ENCODE measurements at regions of chr3 and their contacts with region 1.

Region 1: GRCh38 chr3:189148081-189148507 is 23.7 kb upstream of the TPRG1 start:
- DNase-seq: peak; percentile 43 to 73 (median 53)
- H3K4me3 ChIP-seq: no peak overlapping the region
- H3K4me3 Mint-ChIP-seq: no peak overlapping the region
- H3K27ac ChIP-seq: no peak overlapping the region
- H3K27ac Mint-ChIP-seq: peak overlapping the region in 2 of 8 donors; percentile 5 to 9
- H3K4me1 ChIP-seq: peaks cover 18% of the 10 kb centered on the region
- H3K4me1 Mint-ChIP-seq: peaks cover 16 to 32% (median 25%) of the 10 kb centered on the region in 3 donors
- H3K27me3 ChIP-seq: no peaks in the 10 kb centered on the region
- H3K27me3 Mint-ChIP-seq: peaks cover 0 to 3% of the 10 kb centered on the region in 2 donors

Region 2: GRCh38 chr3:189123595-189124387 is 24.3 kb before region 1 on chr3:
- CTCF ChIA-PET with region 1: interaction called, 59 read pairs
- POLR2A ChIA-PET with region 1: interaction called, 4 read pairs
- DNase-seq: no peak
- H3K4me3 ChIP-seq: peak overlapping the region; percentile 30
- H3K4me3 Mint-ChIP-seq: peak overlapping the region; percentile 81 to 95 (median 86)
- H3K27ac ChIP-seq: no peak overlapping the region
- H3K27ac Mint-ChIP-seq: peak overlapping the region; percentile 17 to 98 (median 92)
- H3K4me1 ChIP-seq: peaks cover 13% of the 10 kb centered on the region
- H3K4me1 Mint-ChIP-seq: peaks cover 39 to 72% (median 72%) of the 10 kb centered on the region in 3 donors
- H3K27me3 ChIP-seq: no peaks in the 10 kb centered on the region
- H3K27me3 Mint-ChIP-seq: peaks cover 0 to 4% of the 10 kb centered on the region in 2 donors

Region 3: DNA sequence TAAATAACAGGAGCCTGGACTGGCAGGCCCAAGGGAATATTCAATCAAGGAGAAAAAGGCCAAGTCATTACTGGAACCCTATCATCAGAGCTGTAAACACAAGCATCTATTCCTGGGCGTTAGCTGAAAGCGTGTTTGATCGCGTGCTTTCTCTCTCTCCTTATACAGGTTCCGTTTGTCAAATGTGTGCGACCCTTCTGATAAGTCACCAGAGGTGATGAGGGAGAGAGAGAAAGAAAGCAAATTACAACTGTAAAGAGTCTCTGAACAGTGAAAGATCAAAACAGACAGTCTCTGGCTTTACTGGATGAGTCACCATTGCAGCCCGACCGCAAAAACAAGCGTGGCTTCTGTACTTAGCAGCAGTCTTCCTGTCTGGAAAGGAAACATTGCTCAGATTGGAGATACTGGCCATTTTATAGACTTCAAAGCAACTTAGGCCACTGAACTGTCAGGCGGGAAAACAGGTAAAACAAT is 15.8 kb before region 1 on chr3:
- CTCF ChIA-PET with region 1: interaction called, 59 read pairs
- POLR2A ChIA-PET with region 1: interaction called, 7 read pairs
- DNase-seq: peak; percentile 61 to 91 (median 70)
- H3K4me3 ChIP-seq: peak overlapping the region; percentile 23
- H3K4me3 Mint-ChIP-seq: peak overlapping the region; percentile 5 to 81 (median 65)
- H3K27ac ChIP-seq: peak overlapping the region; percentile 82
- H3K27ac Mint-ChIP-seq: peak overlapping the region; percentile 94 to 99 (median 97)
- H3K4me1 ChIP-seq: peaks cover 25% of the 10 kb centered on the region
- H3K4me1 Mint-ChIP-seq: peaks cover 46 to 85% (median 67%) of the 10 kb centered on the region in 3 donors
- H3K27me3 ChIP-seq: no peaks in the 10 kb centered on the region
- H3K27me3 Mint-ChIP-seq: no peaks in the 10 kb centered on the region

Measured in CD8-positive, alpha-beta memory T cell (primary cell).